ENCODE measurements at regions of chr17 and their contacts with region 1.

Region 1: DNA sequence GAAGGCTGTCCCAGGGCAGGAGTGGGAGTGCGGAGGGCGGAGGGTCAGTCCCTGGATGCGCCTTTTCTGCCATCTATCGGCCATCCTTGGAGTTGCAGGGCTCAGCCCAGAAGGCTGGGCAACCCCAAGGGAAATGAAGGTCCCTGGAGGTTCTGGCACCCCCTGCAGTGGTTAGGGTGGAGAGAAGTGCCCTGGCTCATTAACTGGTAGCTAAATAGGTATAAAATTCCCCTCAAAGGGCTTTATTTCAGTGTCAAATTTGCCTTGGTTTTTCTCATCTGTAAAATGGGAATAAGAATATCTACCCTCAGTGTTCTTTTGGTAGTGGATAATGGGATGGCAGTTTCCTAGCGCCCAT is 22.4 kb downstream of the C17orf75 start:
- DNase-seq: peak; percentile 58 to 83
- ATAC-seq: peak; percentile 89

Region 2: GRCh38 chr17:32253117-32253611 is 66.4 kb before region 1 on chr17:
- intact Hi-C with region 1: loop called (anchors 2 to 5 kb)
- DNase-seq: peak; percentile 56 to 82
- ATAC-seq: peak; percentile 94

Region 3: GRCh38 chr17:32609085-32609484 is 289.6 kb after region 1 on chr17:
- intact Hi-C with region 1: no loop called
- DNase-seq: peak in 1 of 2 donors; percentile 46
- ATAC-seq: peak; percentile 48

Measured in left colon (tissue), 2 donors.